AG04450 (cell line): ENCODE measurements at regions of chr7 and their contacts with region 1.

Region 1: DNA sequence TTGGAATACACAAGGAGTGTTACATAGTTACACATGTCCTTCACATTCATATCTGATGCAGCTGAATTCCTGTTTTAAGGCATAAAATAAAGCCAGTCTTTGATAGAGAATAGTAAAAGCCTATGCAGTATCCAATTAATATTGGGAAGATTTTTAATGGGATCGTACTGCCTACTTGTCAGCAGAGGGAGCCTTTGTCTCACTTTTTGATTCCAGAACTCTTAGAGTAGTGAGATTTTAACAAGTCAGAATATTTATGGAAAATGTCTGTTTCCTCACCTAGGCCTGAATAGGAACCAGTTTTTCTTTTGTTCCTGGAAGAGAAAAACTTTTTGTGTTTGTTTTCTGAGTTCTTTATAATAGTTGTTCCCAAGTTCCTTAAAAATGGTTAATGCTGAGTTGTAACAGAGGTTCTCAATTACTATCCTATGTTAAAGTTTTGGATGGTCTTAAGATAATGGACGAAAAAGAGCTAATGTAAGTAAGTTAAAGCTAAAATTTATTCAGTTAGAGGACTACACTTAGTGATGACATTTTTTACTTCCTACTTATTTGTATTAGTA is 114.0 kb downstream of the BBS9 start:
- DNase-seq: peak; percentile 27
- H3K4me3 ChIP-seq: no peak overlapping the region
- H3K27ac ChIP-seq: no peak overlapping the region
- H3K27me3 ChIP-seq: no peaks in the 10 kb centered on the region
- CTCF ChIP-seq: peak; percentile 77

Region 2: DNA sequence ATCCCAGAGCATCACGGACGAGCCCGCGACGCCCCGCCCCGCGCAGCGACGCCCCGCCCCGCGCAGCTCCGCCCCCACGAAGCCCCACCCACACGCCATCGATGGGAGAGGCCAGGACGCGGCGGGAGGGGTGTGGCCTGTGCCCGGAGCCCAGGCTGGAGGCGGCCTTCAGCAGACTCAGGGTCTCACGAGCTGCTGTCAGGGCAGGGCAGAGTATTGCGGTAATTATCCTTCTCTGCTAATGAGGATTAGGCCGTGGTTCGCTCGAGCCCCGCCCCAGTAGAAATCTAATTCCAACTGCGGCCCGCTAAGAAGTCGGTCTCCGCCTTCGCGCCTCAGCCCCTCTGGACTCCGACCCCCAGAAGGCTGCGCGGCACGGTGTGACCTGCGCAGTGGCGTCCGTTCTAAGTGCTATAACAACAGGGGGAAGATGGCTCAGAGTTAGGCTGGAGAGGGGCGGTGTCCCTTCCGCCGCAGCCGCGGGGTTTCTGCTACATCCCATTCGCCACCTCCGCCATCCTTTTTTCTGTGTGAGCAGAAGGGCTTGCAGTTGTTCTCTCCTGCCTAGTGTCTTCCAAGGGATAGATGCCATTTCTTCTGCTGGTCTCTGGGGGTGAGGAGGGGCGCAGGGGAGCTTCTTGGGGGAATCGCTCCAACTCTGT is 180.5 kb before region 1 on chr7:
- CTCF ChIA-PET with region 1: no interaction called
- POLR2A ChIA-PET with region 1: no interaction called
- DNase-seq: peak; percentile 79
- H3K4me3 ChIP-seq: peak overlapping the region; percentile 86
- H3K27ac ChIP-seq: peak overlapping the region; percentile 90
- H3K27me3 ChIP-seq: no peaks in the 10 kb centered on the region
- CTCF ChIP-seq: no peak

Region 3: GRCh38 chr7:33185786-33186185 is 57.6 kb before region 1 on chr7:
- CTCF ChIA-PET with region 1: interaction called, 12 read pairs
- POLR2A ChIA-PET with region 1: no interaction called
- DNase-seq: peak; percentile 10
- H3K4me3 ChIP-seq: no peak overlapping the region
- H3K27ac ChIP-seq: no peak overlapping the region
- H3K27me3 ChIP-seq: no peaks in the 10 kb centered on the region
- CTCF ChIP-seq: peak; percentile 70

Region 4: GRCh38 chr7:33258491-33258951 is 15.1 kb after region 1 on chr7:
- CTCF ChIA-PET with region 1: interaction called, 10 read pairs
- POLR2A ChIA-PET with region 1: no interaction called
- DNase-seq: peak; percentile 3
- H3K4me3 ChIP-seq: no peak overlapping the region
- H3K27ac ChIP-seq: no peak overlapping the region
- H3K27me3 ChIP-seq: no peaks in the 10 kb centered on the region
- CTCF ChIP-seq: no peak

Region 5: GRCh38 chr7:33287748-33288147 is 44.3 kb after region 1 on chr7:
- CTCF ChIA-PET with region 1: no interaction called
- POLR2A ChIA-PET with region 1: no interaction called
- DNase-seq: no peak
- H3K4me3 ChIP-seq: no peak overlapping the region
- H3K27ac ChIP-seq: no peak overlapping the region
- H3K27me3 ChIP-seq: no peaks in the 10 kb centered on the region
- CTCF ChIP-seq: no peak